ENCODE measurements at regions of chr4 and their contacts with region 1.

Region 1: DNA sequence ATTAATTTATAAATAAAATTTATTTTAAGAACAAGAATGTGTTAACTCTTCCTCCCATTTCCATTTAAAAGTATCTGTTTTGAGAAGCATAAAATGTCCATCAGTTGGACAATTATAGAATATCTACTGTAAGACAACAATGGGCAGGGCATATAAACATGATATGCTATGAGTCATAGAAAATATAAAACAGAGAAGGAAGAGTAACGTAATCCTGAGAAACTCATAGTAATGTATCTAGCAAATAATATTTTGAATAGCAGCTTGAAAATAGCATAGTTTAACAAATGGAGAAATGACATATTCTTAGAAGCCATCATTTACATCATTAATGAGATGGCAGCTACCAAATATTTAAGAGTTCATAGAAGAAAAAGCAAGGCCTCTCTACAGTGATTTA is 820.3 kb upstream of the PCDH10 start:
- DNase-seq: no peak
- H3K4me3 ChIP-seq: no peak overlapping the region
- H3K27ac ChIP-seq: no peak overlapping the region
- H3K4me1 ChIP-seq: no peaks in the 10 kb centered on the region
- CTCF ChIP-seq: no peak

Region 2: GRCh38 chr4:132316738-132317137 is 12.0 kb before region 1 on chr4:
- CTCF ChIA-PET with region 1: no interaction called
- POLR2A ChIA-PET with region 1: interaction called, 10 read pairs
- intact Hi-C with region 1: no loop called
- DNase-seq: no peak
- H3K4me3 ChIP-seq: no peak overlapping the region
- H3K27ac ChIP-seq: no peak overlapping the region
- H3K4me1 ChIP-seq: peaks cover 6% of the 10 kb centered on the region
- CTCF ChIP-seq: no peak

Region 3: DNA sequence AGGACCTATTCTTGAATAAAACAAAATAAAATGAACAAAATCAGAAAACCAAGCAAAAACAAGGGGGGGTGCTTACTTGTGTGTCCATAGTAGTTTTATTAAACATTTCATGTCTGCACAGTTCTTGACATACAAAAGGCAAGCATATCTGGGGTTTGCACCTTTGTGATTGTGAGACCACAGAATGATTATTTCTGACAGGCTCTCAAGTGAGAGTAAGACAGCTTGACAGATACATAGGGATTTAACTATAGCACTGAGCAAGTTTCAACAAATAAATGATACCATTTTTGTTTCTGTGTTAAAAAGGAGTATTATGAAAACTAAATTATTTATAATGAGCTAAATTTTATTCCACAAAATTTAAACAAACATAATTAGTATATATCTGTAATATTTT is 108.4 kb after region 1 on chr4:
- CTCF ChIA-PET with region 1: no interaction called
- POLR2A ChIA-PET with region 1: no interaction called
- intact Hi-C with region 1: no loop called
- DNase-seq: no peak
- H3K4me3 ChIP-seq: no peak overlapping the region
- H3K27ac ChIP-seq: no peak overlapping the region
- H3K4me1 ChIP-seq: no peaks in the 10 kb centered on the region
- CTCF ChIP-seq: no peak

Measured in OCI-LY7 (cell line).